ENCODE measurements at regions of chr4 and their contacts with region 1.

Region 1: GRCh38 chr4:64158648-64159326 is 250.5 kb downstream of the TECRL start:
- DNase-seq: peak; percentile 71
- H3K4me3 Mint-ChIP-seq: no peak overlapping the region
- H3K27ac Mint-ChIP-seq: no peak overlapping the region
- H3K4me1 Mint-ChIP-seq: no peaks in the 10 kb centered on the region
- H3K27me3 Mint-ChIP-seq: no peaks in the 10 kb centered on the region

Region 2: DNA sequence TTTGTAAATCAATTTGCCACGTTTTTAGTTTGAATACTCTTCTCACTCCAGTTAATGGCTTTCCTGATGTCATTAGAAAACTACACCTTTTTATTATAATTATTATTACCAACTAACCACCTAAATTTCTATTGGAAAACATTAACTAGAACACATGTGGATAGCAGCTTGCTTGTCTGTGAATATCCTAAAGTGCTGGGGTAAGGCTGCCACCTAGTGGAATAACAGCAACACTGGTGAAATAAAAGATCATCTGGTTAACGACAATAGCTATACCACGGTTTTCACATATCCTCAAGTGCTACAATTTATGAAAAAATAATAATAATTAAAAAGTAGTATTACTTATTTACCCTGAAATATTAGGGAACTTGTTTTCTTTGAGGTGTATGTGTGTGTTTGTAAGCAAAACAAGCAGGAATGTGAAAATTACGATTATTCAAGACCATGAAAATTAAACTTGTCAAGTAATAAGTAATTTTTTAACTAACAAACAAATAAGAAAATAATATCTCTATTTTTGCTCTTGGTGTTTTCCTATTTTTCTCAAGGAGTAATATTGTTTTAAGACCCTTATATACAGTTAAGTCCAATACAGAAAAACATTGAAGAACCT is 380.6 kb after region 1 on chr4:
- CTCF ChIA-PET with region 1: interaction called, 5 read pairs
- intact Hi-C with region 1: loop called (anchors 1 kb)
- DNase-seq: peak; percentile 62
- H3K4me3 Mint-ChIP-seq: no peak overlapping the region
- H3K27ac Mint-ChIP-seq: no peak overlapping the region
- H3K4me1 Mint-ChIP-seq: no peaks in the 10 kb centered on the region
- H3K27me3 Mint-ChIP-seq: no peaks in the 10 kb centered on the region

Region 3: GRCh38 chr4:64584981-64585557 is 426.3 kb after region 1 on chr4:
- CTCF ChIA-PET with region 1: no interaction called
- intact Hi-C with region 1: loop called (anchors 1 kb)
- DNase-seq: peak; percentile 18
- H3K4me3 Mint-ChIP-seq: no peak overlapping the region
- H3K27ac Mint-ChIP-seq: no peak overlapping the region
- H3K4me1 Mint-ChIP-seq: no peaks in the 10 kb centered on the region
- H3K27me3 Mint-ChIP-seq: no peaks in the 10 kb centered on the region

Measured in activated naive CD4-positive, alpha-beta T cell treated with anti-CD3 and anti-CD28 coated beads for 36 hours (primary cell).